ENCODE measurements at regions of chr6 and their contacts with region 1.

Region 1: GRCh38 chr6:75748743-75749501 is at the start of gene MYO6:
- DNase-seq: peak; percentile 56
- ATAC-seq: peak; percentile 66
- H3K4me3 ChIP-seq: peak within 1 kb of the TSS; percentile 57 to 73 (median 71)
- H3K4me3 Mint-ChIP-seq: peak within 1 kb of the TSS; percentile 89
- H3K27ac ChIP-seq: peak within 1 kb of the TSS in 1 of 2 donors; percentile 43
- H3K27ac Mint-ChIP-seq: peak within 1 kb of the TSS; percentile 32
- H3K4me1 ChIP-seq: peaks cover 25 to 28% of the 10 kb centered on the region in 2 donors
- H3K4me1 Mint-ChIP-seq: peaks cover 19% of the 10 kb centered on the region
- H3K27me3 ChIP-seq: peaks cover under 1 to 64% (median 54%) of the 10 kb centered on the region in 4 experiments
- H3K27me3 Mint-ChIP-seq: peaks cover 60% of the 10 kb centered on the region
- CTCF ChIP-seq: no peak
- total RNA-seq, gene MYO6: 0.39 and 0.59 TPM in 2 replicates

Region 2: GRCh38 chr6:75243333-75244062 is 505.4 kb before region 1 on chr6 and contains the start of gene COX7A2:
- CTCF ChIA-PET with region 1: no interaction called
- POLR2A ChIA-PET with region 1: no interaction called
- intact Hi-C with region 1: loop called (anchors 5 kb)
- DNase-seq: peak; percentile 92
- ATAC-seq: peak; percentile 98
- H3K4me3 ChIP-seq: peak within 1 kb of the TSS; percentile 85 to 98 (median 90)
- H3K4me3 Mint-ChIP-seq: peak within 1 kb of the TSS; percentile 99
- H3K27ac ChIP-seq: peak within 1 kb of the TSS; percentile 92 to 97
- H3K27ac Mint-ChIP-seq: peak within 1 kb of the TSS; percentile 98
- H3K4me1 ChIP-seq: peaks cover 5 to 10% of the 10 kb centered on the region in 2 donors
- H3K4me1 Mint-ChIP-seq: peaks cover 24% of the 10 kb centered on the region
- H3K27me3 ChIP-seq: peaks cover 0 to 14% (median 4%) of the 10 kb centered on the region in 4 experiments
- H3K27me3 Mint-ChIP-seq: peaks cover 16% of the 10 kb centered on the region
- CTCF ChIP-seq: no peak
- total RNA-seq, gene COX7A2: 157 and 160 TPM in 2 replicates

Region 3: GRCh38 chr6:75601304-75602245 is 147.3 kb before region 1 on chr6 and contains the start of gene SENP6:
- CTCF ChIA-PET with region 1: no interaction called
- POLR2A ChIA-PET with region 1: no interaction called
- intact Hi-C with region 1: loop called (anchors 2 kb)
- DNase-seq: peak; percentile 93
- ATAC-seq: peak; percentile 80
- H3K4me3 ChIP-seq: peak within 1 kb of the TSS; percentile 84 to 99 (median 92)
- H3K4me3 Mint-ChIP-seq: peak within 1 kb of the TSS; percentile 94
- H3K27ac ChIP-seq: peak within 1 kb of the TSS; percentile 92 to 97
- H3K27ac Mint-ChIP-seq: peak within 1 kb of the TSS; percentile 98
- H3K4me1 ChIP-seq: peaks cover 36 to 44% of the 10 kb centered on the region in 2 donors
- H3K4me1 Mint-ChIP-seq: peaks cover 62% of the 10 kb centered on the region
- H3K27me3 ChIP-seq: no peaks in the 10 kb centered on the region
- H3K27me3 Mint-ChIP-seq: no peaks in the 10 kb centered on the region
- CTCF ChIP-seq: no peak
- total RNA-seq, gene SENP6: 161 and 178 TPM in 2 replicates

Region 4: GRCh38 chr6:75676377-75676776 is 72.5 kb before region 1 on chr6:
- CTCF ChIA-PET with region 1: no interaction called
- POLR2A ChIA-PET with region 1: no interaction called
- intact Hi-C with region 1: loop called (anchors 5 kb)
- DNase-seq: no peak
- ATAC-seq: no peak
- H3K4me3 ChIP-seq: no peak overlapping the region
- H3K4me3 Mint-ChIP-seq: no peak overlapping the region
- H3K27ac ChIP-seq: no peak overlapping the region
- H3K27ac Mint-ChIP-seq: no peak overlapping the region
- H3K4me1 ChIP-seq: no peaks in the 10 kb centered on the region
- H3K4me1 Mint-ChIP-seq: no peaks in the 10 kb centered on the region
- H3K27me3 ChIP-seq: no peaks in the 10 kb centered on the region
- H3K27me3 Mint-ChIP-seq: no peaks in the 10 kb centered on the region
- CTCF ChIP-seq: no peak

Region 5: GRCh38 chr6:75934643-75935472 is 185.9 kb after region 1 on chr6:
- CTCF ChIA-PET with region 1: no interaction called
- POLR2A ChIA-PET with region 1: no interaction called
- intact Hi-C with region 1: no loop called
- DNase-seq: peak; percentile 53
- ATAC-seq: peak; percentile 33
- H3K4me3 ChIP-seq: peak overlapping the region in 4 of 5 experiments; percentile 10 to 50 (median 30)
- H3K4me3 Mint-ChIP-seq: peak overlapping the region; percentile 81
- H3K27ac ChIP-seq: no peak overlapping the region
- H3K27ac Mint-ChIP-seq: no peak overlapping the region
- H3K4me1 ChIP-seq: peaks cover 8 to 9% of the 10 kb centered on the region in 2 donors
- H3K4me1 Mint-ChIP-seq: peaks cover 6% of the 10 kb centered on the region
- H3K27me3 ChIP-seq: peaks cover 0 to 20% (median 3%) of the 10 kb centered on the region in 4 experiments
- H3K27me3 Mint-ChIP-seq: peaks cover 24% of the 10 kb centered on the region
- CTCF ChIP-seq: peak; percentile 69